SK-N-SH (cell line): ENCODE measurements at regions of chr4 and their contacts with region 1.

Region 1: DNA sequence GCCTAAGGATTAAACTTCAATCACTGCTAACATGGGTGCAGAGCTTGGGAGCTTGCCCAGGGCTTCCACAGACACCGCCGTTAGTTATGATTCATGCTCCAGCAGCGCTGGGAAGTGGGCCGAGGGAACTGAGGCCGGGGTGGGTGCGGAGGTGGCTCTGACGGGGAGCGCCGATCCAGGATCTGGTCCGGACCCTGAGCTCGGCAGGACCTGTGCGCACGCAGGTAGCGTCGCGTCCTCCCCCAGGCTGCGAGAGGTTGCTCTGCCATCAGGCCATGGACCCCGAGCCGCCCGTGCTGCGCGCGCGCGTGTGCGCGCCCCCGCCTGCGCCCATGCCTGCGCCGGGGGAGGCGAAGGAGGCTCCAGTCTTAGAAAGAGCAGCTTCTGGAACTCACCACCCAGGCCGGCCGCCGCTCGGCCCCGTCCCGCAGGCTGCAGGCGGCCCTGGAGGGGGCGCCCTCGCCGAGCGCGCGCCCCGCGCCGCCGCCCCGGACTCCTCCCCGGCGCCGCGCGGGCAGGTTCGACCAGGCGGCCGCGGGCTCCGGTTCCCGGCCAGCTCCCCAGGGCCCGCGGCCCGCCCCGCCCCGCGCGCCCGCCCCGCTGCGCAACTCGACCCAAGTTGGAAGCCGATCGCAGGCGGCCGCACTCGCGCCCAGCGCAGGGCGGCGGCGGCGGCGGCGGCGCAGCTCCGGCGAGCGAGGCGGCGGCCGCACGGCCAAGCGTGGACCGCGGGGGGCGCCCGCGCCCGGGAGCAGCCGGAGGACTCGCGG is 729 bp upstream of the ADRA2C start:
- DNase-seq: peak; percentile 91
- H3K4me3 ChIP-seq: peak overlapping the region in 1 of 2 experiments; percentile 40; a peak in 2 of 4 replicates
- H3K27ac ChIP-seq: peak overlapping the region in 1 of 2 experiments; percentile 47; a peak in 2 of 4 replicates
- H3K4me1 ChIP-seq: peaks cover 0 to 13% of the 10 kb centered on the region in 2 experiments; a peak in 1 of 4 replicates
- H3K27me3 ChIP-seq: no peaks in the 10 kb centered on the region
- CTCF ChIP-seq: no peak; the same call in 1 of the 2 replicates
- EP300 ChIP-seq: no peak
- RAD21 ChIP-seq: peak; percentile 26; the same call in 1 of the 2 replicates

Region 2: GRCh38 chr4:3688018-3688998 is 77.1 kb before region 1 on chr4:
- CTCF ChIA-PET with region 1: no interaction called
- POLR2A ChIA-PET with region 1: no interaction called
- DNase-seq: no peak
- H3K4me3 ChIP-seq: no peak overlapping the region
- H3K27ac ChIP-seq: no peak overlapping the region
- H3K4me1 ChIP-seq: peaks cover 0 to 2% of the 10 kb centered on the region in 2 experiments; a peak in 1 of 4 replicates
- H3K27me3 ChIP-seq: no peaks in the 10 kb centered on the region
- CTCF ChIP-seq: no peak
- EP300 ChIP-seq: no peak
- RAD21 ChIP-seq: no peak

Region 3: DNA sequence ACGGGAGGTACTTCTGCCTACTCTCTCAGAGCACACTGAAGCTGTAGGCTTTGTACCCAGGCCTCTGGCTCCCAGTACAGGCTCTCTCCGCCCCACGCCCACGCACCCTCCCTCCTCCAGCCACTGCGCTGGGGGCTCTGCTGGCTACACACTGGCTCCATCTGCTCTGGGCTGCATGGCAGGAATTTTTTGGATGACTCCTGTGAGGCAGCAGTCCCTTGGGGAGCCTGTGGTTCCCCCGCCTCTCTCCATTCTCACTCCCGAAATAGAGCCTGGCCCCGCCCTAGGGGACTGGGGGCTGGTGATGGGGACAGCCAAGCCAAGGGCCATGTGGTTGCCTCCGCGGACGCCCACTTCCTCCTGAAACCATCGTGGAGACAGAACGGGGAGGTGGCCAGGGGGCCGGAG is 57.3 kb before region 1 on chr4:
- CTCF ChIA-PET with region 1: interaction called, 11 read pairs
- POLR2A ChIA-PET with region 1: interaction called, 3 read pairs
- DNase-seq: no peak
- H3K4me3 ChIP-seq: no peak overlapping the region
- H3K27ac ChIP-seq: peak overlapping the region in 1 of 2 experiments; percentile 99; a peak in 2 of 4 replicates
- H3K4me1 ChIP-seq: peaks cover 0 to 71% of the 10 kb centered on the region in 2 experiments; a peak in 1 of 4 replicates
- H3K27me3 ChIP-seq: no peaks in the 10 kb centered on the region
- CTCF ChIP-seq: no peak
- EP300 ChIP-seq: no peak
- RAD21 ChIP-seq: no peak

Region 4: GRCh38 chr4:3747581-3747904 is 17.9 kb before region 1 on chr4:
- CTCF ChIA-PET with region 1: interaction called, 60 read pairs
- POLR2A ChIA-PET with region 1: no interaction called
- DNase-seq: no peak
- H3K4me3 ChIP-seq: no peak overlapping the region
- H3K27ac ChIP-seq: no peak overlapping the region
- H3K4me1 ChIP-seq: peaks cover 0 to 15% of the 10 kb centered on the region in 2 experiments; a peak in 2 of 4 replicates
- H3K27me3 ChIP-seq: no peaks in the 10 kb centered on the region
- CTCF ChIP-seq: no peak
- EP300 ChIP-seq: no peak
- RAD21 ChIP-seq: peak; percentile 31; the same call in 1 of the 2 replicates

Region 5: DNA sequence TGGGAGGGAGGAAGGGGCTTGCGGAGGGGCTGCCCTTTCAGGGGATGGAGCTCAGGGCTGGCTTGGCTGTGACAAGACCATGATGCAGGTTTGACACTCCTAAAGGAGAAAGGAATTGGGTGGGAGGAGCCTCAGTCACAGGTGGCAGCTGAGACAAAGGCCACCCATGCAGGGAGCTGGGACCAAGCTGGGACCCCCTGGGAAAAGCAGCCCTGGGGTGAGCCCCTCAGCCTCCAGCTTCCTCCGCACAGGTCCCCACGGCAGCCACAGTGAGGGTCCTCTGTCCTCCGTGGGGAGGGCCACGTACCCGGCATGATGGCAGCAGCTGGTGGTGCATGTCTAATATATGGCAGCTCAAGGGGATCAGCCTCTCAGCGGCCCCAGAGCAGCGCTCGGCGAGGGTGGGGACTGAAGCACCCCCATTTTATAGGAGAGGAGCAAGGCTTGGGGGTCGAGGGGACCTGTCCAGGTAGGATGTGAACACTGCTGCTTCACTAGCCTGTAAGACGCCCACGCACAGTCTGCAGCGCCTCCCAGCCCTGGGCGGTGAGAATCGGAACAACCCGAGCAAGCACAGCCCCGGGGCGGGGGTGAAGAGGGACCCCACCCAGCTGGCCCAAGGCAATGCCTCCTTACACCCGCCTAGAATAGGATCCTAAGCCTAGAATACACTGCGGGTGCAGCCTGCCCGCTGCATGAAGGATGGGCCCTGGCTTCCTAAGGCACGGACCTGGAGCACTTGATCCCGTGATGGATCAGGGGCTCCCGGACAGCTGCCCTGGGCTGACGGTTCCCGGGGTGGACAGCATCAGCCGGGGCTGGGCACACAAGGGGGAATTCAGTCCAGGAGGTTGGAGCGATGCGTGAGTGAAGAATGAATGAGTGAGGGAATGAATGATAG is 18.2 kb after region 1 on chr4:
- CTCF ChIA-PET with region 1: interaction called, 179 read pairs
- POLR2A ChIA-PET with region 1: interaction called, 16 read pairs
- DNase-seq: no peak
- H3K4me3 ChIP-seq: no peak overlapping the region
- H3K27ac ChIP-seq: no peak overlapping the region; a peak in 1 of 4 replicates
- H3K4me1 ChIP-seq: peaks cover 0 to 62% of the 10 kb centered on the region in 2 experiments; a peak in 2 of 4 replicates
- H3K27me3 ChIP-seq: no peaks in the 10 kb centered on the region
- CTCF ChIP-seq: no peak
- EP300 ChIP-seq: no peak
- RAD21 ChIP-seq: no peak

Region 6: DNA sequence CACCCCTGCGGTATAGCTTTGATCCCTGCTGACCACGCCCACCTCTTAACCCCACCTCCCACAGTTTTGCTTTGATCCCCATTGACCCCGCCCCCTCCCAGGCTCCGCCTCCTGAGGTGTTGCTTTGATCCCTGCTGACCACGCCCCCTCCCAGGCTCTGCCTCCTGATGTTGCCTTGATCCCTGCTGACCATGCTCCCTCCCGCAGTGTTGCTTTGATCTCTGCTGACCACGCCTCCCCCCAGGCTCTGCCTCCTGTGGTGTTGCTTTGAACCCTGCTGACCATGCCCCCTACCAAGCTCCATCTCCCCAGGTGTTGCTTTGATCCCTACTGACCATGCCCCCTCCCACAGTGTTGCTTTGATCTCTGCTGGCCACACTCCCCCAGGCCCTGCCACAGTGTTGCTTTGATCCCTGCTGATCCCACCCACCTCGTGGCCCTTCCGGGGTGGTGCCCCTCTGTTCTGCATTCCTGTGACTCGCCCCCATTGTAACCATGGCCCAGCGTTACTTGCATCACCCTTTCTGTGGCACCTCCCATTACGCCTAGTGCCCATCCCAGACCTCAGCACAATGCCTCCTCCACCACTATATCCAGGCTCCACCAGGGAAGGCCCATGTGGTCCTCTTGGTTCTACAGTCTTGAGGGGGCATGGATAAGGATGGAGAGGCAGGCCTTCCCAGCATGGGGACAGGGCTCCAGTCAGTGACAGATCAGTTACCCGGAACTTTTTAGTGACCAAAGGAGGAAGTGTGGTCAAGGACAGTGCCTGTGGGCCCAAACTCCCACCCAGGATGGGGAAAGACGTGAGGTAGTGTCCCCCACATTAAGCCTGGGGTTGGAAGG is 71.5 kb after region 1 on chr4:
- CTCF ChIA-PET with region 1: interaction called, 12 read pairs
- POLR2A ChIA-PET with region 1: no interaction called
- DNase-seq: peak; percentile 84
- H3K4me3 ChIP-seq: no peak overlapping the region
- H3K27ac ChIP-seq: no peak overlapping the region
- H3K4me1 ChIP-seq: peaks cover 0 to 17% of the 10 kb centered on the region in 2 experiments; a peak in 1 of 4 replicates
- H3K27me3 ChIP-seq: no peaks in the 10 kb centered on the region
- CTCF ChIP-seq: no peak
- EP300 ChIP-seq: no peak
- RAD21 ChIP-seq: no peak

Region 7: GRCh38 chr4:3868211-3869173 is 103.0 kb after region 1 on chr4:
- CTCF ChIA-PET with region 1: interaction called, 10 read pairs
- POLR2A ChIA-PET with region 1: no interaction called
- DNase-seq: no peak
- H3K4me3 ChIP-seq: no peak overlapping the region
- H3K27ac ChIP-seq: no peak overlapping the region
- H3K4me1 ChIP-seq: peaks cover 0 to 3% of the 10 kb centered on the region in 2 experiments; a peak in 1 of 4 replicates
- H3K27me3 ChIP-seq: no peaks in the 10 kb centered on the region; the same call in 1 of the 2 replicates
- CTCF ChIP-seq: no peak
- EP300 ChIP-seq: no peak
- RAD21 ChIP-seq: no peak

Region 8: DNA sequence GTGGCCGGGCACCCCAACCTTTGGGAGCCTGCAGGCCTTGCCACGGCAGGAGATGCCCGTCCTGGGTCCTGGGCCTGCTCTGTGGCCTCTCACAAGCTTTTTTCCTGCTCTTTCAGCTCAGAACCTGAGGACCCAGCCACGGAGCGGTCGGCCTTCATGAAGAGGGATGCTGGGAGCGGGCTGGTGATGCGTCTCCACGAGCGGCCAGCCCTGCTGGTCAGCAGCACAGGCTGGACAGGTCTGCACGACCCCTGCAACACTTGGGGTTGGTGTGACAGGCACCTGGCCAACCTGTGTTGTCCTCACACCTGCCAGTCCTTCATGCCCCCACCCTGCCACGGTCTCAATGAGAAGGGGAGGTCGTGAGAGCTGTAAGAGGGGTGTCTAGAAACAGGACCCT is 170.7 kb after region 1 on chr4:
- CTCF ChIA-PET with region 1: interaction called, 13 read pairs
- POLR2A ChIA-PET with region 1: no interaction called
- DNase-seq: no peak
- H3K4me3 ChIP-seq: no peak overlapping the region
- H3K27ac ChIP-seq: no peak overlapping the region
- H3K4me1 ChIP-seq: no peaks in the 10 kb centered on the region; a peak in 1 of 4 replicates
- H3K27me3 ChIP-seq: no peaks in the 10 kb centered on the region
- CTCF ChIP-seq: no peak
- EP300 ChIP-seq: no peak
- RAD21 ChIP-seq: no peak